Uterus (tissue), 4 donors: ENCODE measurements at regions of chr11 and their contacts with region 1.

Region 1: GRCh38 chr11:2420502-2421225 is 20.1 kb downstream of the TSSC4 start:
- DNase-seq: peak; percentile 72 to 77
- H3K4me3 ChIP-seq: no peak overlapping the region
- H3K27ac ChIP-seq: peak overlapping the region; percentile 61 to 67
- H3K4me1 ChIP-seq: no peaks in the 10 kb centered on the region
- H3K27me3 ChIP-seq: no peaks in the 10 kb centered on the region
- CTCF ChIP-seq: peak; percentile 90 to 98 (median 96)
- POLR2A ChIP-seq: peak in 1 of 2 donors; percentile 32

Region 2: GRCh38 chr11:1460396-1460985 is 960.2 kb before region 1 on chr11:
- intact Hi-C with region 1: no loop called
- DNase-seq: peak; percentile 78 to 84
- H3K4me3 ChIP-seq: peak overlapping the region; percentile 25 to 47
- H3K27ac ChIP-seq: peak overlapping the region; percentile 89 to 96
- H3K4me1 ChIP-seq: peaks cover 0 to 18% of the 10 kb centered on the region in 2 donors
- H3K27me3 ChIP-seq: no peaks in the 10 kb centered on the region
- CTCF ChIP-seq: no peak
- POLR2A ChIP-seq: no peak

Region 3: GRCh38 chr11:2892215-2893020 is 471.8 kb after region 1 on chr11:
- intact Hi-C with region 1: loop called (anchors 10 kb)
- DNase-seq: peak; percentile 60 to 66
- H3K4me3 ChIP-seq: peak overlapping the region; percentile 31 to 32
- H3K27ac ChIP-seq: peak overlapping the region; percentile 90
- H3K4me1 ChIP-seq: peaks cover 15 to 17% of the 10 kb centered on the region in 2 donors
- H3K27me3 ChIP-seq: no peaks in the 10 kb centered on the region
- CTCF ChIP-seq: peak; percentile 95 to 98 (median 96)
- POLR2A ChIP-seq: no peak